Activated CD8-positive, alpha-beta T cell treated with anti-CD3 and anti-CD28 coated beads, Interleukin-2, amount 10 ng/mL, durations not matched to agents 7 days and 5 days (primary cell): ENCODE measurements at regions of chr11 and their contacts with region 1.

Region 1: GRCh38 chr11:124070915-124071635 is 29.9 kb upstream of the OR10G7 start:
- DNase-seq: peak; percentile 80
- ATAC-seq: no peak
- H3K4me3 Mint-ChIP-seq: no peak overlapping the region
- H3K27ac Mint-ChIP-seq: no peak overlapping the region
- H3K4me1 Mint-ChIP-seq: peaks cover 14% of the 10 kb centered on the region
- H3K27me3 Mint-ChIP-seq: peaks cover 19% of the 10 kb centered on the region

Region 2: DNA sequence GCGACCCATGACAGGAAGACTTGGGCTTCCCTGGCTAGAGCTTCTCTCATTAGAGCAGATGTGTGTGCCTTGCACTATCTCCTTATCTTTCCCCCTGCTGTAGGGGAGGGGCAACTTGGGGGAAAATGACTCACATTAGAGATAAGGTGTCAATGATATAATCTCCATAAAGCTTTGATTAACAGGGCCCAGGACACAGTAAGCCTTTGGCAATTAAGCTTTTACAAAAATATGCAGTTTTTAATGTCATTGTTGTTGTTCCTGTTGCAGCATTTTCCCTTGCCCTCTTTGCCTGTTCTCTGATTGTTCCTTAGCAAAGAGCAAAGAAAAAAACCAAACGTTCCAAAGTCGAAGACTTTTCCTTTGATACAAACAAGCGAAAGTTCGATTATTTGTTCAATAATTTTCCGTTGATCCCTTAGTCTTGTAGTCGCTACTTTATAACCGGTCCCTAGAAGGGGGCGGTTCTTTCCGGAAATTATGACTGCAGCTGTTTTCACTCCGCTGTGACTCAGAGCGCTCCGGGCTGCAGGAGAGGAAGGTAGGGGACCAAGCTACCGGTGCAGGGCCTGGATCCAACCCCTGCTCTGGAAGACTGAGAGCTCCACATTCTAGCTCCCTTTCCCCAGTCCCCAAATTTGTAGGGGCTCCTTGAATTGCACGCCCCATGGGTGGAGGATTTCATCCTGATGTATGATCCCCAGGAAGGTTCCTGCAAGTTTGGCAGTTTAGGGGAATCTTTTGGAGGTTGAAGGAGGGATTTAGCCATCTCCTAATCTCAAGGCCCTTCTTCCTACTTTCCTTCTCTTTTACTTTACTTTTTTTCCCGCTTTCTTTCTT is 44.1 kb after region 1 on chr11 and contains the start of gene VWA5A:
- CTCF ChIA-PET with region 1: interaction called, 13 read pairs
- POLR2A ChIA-PET with region 1: interaction called, 4 read pairs
- DNase-seq: peak; percentile 85
- ATAC-seq: peak; percentile 99
- H3K4me3 Mint-ChIP-seq: peak within 1 kb of the TSS; percentile 85
- H3K27ac Mint-ChIP-seq: peak within 1 kb of the TSS; percentile 71
- H3K4me1 Mint-ChIP-seq: peaks cover 20% of the 10 kb centered on the region
- H3K27me3 Mint-ChIP-seq: peaks cover 4% of the 10 kb centered on the region
- total RNA-seq, gene VWA5A: 3.3 to 3.8 TPM

Region 3: DNA sequence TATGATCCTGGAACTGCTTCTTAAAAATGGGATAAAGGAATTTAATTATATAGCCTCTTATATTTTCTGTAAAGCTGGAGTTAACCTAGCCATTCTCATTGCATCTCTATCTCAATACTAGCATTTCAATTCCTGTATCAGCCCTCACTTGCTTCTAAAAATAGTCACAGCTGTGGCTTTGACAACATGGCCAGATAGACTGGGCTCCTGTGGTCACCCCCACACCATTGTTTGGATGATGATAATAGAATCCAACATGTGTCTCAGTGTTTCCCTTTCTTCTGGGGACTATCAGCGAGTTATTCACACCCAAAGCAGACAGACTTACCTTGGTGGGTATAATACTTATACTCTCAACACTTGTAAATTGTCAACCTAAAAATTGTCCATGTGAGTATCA is 51.0 kb after region 1 on chr11:
- CTCF ChIA-PET with region 1: interaction called, 12 read pairs
- POLR2A ChIA-PET with region 1: no interaction called
- DNase-seq: no peak
- ATAC-seq: no peak
- H3K4me3 Mint-ChIP-seq: no peak overlapping the region
- H3K27ac Mint-ChIP-seq: no peak overlapping the region
- H3K4me1 Mint-ChIP-seq: no peaks in the 10 kb centered on the region
- H3K27me3 Mint-ChIP-seq: no peaks in the 10 kb centered on the region

Region 4: DNA sequence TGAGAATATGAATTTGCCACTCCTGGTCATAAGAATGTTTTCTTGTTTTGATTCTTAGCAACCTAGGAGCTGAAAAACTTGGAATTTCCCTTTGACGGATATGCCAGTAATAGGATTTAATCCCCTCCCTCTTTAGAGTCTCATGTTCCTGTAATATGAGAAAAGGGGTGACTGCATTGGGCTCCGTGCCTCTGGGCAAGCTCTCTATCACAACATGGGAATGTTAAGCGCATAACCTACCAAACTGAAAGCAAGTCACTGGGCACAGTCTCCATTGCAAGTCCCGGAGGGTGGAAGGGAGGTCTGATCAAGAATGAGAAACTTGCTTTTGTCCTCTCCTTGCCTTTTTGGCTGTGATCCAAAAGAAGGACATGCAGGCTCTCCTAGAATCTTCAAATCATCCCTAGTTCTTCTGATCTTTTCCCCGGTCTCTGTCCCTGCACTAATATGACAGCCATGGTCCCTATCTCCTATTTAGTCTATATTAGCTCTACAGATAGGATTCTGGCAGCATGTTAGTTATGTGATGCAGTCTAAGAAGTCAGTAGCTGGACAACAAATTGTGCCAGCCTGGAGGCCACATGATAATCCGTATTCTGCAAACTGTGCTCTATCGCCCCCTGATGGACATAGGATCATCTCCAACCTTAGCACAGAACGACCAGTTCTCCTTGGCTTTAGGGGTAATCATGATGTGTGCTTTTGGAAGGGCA is 123.8 kb after region 1 on chr11:
- CTCF ChIA-PET with region 1: interaction called, 63 read pairs
- POLR2A ChIA-PET with region 1: no interaction called
- DNase-seq: peak; percentile 63
- ATAC-seq: peak; percentile 88
- H3K4me3 Mint-ChIP-seq: no peak overlapping the region
- H3K27ac Mint-ChIP-seq: no peak overlapping the region
- H3K4me1 Mint-ChIP-seq: no peaks in the 10 kb centered on the region
- H3K27me3 Mint-ChIP-seq: peaks cover 13% of the 10 kb centered on the region

Region 5: DNA sequence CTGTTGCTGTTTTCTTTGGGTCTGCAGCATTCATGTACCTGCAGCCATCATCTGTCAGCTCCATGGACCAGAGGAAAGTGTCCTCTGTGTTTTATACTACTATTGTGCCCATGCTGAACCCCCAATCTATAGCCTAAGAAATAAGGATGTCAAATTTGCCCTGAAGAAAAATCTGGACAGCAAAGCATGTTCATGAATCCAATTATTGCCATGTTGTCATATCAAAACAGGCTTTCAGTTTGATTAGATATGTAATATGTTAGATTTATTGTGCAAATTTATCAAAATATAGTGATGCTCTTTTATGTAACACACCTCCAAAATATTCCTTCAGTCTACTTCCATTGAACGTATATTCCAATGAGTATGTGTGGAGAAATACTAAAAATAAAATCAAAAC is 154.4 kb after region 1 on chr11:
- CTCF ChIA-PET with region 1: no interaction called
- POLR2A ChIA-PET with region 1: no interaction called
- DNase-seq: no peak
- ATAC-seq: no peak
- H3K4me3 Mint-ChIP-seq: no peak overlapping the region
- H3K27ac Mint-ChIP-seq: no peak overlapping the region
- H3K4me1 Mint-ChIP-seq: no peaks in the 10 kb centered on the region
- H3K27me3 Mint-ChIP-seq: no peaks in the 10 kb centered on the region

Region 6: GRCh38 chr11:124402326-124402922 is 331.3 kb after region 1 on chr11:
- CTCF ChIA-PET with region 1: interaction called, 23 read pairs
- POLR2A ChIA-PET with region 1: no interaction called
- DNase-seq: peak; percentile 68
- ATAC-seq: peak; percentile 81
- H3K4me3 Mint-ChIP-seq: no peak overlapping the region
- H3K27ac Mint-ChIP-seq: no peak overlapping the region
- H3K4me1 Mint-ChIP-seq: peaks cover 2% of the 10 kb centered on the region
- H3K27me3 Mint-ChIP-seq: peaks cover 1% of the 10 kb centered on the region